KBM-7 (cell line): ENCODE measurements at regions of chr7 and their contacts with region 1.

Region 1: DNA sequence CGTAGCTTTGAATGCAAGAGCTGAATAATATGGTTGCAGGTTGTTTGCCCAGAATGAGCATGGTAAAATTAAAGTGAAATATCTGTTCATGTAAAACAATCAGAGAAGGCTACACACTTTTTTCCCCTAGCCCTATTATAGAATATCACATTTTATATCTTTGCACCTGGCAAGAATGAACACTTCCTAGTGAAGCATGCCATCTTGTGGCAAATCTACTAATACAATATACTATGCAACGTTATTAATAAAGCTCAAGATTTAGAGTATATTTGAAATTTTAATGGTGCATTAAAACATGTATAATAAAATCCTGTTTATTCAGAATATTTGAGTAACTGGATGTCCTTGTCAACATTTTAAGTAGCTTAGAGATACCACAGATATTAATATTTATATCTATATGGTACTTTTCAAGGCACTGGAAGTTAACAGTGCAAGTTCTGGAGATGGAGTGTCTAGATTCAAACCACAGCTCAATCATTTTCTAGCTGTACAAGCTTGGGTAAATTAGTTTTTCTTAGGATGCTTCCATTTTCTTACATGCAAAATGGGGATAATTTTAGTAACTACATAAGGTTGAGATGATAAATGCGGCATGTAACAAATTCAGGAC is 643.1 kb upstream of the SEMA3D start:
- DNase-seq: peak; percentile 22

Region 2: GRCh38 chr7:85041605-85042216 is 788.2 kb before region 1 on chr7:
- in situ Hi-C with region 1: loop called (anchors 25 kb)
- DNase-seq: peak; percentile 79

Region 3: GRCh38 chr7:85940798-85941197 is 110.9 kb after region 1 on chr7:
- in situ Hi-C with region 1: no loop called
- DNase-seq: no peak